AG04449 (cell line): ENCODE measurements at regions of chr13 and their contacts with region 1.

Region 1: GRCh38 chr13:35789335-35790165 is 313.1 kb upstream of the MAB21L1 start:
- DNase-seq: no peak
- H3K4me3 ChIP-seq: no peak overlapping the region
- CTCF ChIP-seq: peak; percentile 50

Region 2: DNA sequence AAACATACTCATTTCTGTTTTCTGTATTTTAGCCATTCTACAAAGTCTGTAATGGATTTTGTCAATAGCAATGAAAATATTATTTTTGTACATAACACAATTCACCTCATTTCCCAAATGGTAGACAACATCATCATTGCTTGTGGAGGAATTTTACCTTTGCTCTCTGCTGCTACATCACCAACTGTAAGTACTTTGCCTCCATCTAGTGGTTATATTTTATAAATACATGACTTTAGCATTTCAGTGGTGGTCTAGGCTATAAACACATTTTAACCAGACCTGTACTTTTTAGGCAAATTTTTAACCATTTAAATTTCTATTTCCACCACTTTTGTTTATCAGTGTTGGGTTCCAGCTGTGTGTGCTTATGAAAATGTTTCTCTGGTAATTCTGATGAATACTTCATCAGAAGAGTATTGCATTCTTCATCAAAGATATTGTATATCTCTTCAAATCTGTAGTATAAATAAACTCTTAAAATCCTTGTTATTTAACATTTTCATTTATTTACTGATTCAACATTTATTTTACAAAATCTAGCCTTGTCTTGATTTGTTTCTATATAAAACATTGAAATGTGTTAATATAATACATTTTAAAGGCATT is 625.1 kb before region 1 on chr13:
- CTCF ChIA-PET with region 1: interaction called, 13 read pairs
- POLR2A ChIA-PET with region 1: no interaction called
- DNase-seq: no peak
- H3K4me3 ChIP-seq: no peak overlapping the region
- CTCF ChIP-seq: peak; percentile 49

Region 3: DNA sequence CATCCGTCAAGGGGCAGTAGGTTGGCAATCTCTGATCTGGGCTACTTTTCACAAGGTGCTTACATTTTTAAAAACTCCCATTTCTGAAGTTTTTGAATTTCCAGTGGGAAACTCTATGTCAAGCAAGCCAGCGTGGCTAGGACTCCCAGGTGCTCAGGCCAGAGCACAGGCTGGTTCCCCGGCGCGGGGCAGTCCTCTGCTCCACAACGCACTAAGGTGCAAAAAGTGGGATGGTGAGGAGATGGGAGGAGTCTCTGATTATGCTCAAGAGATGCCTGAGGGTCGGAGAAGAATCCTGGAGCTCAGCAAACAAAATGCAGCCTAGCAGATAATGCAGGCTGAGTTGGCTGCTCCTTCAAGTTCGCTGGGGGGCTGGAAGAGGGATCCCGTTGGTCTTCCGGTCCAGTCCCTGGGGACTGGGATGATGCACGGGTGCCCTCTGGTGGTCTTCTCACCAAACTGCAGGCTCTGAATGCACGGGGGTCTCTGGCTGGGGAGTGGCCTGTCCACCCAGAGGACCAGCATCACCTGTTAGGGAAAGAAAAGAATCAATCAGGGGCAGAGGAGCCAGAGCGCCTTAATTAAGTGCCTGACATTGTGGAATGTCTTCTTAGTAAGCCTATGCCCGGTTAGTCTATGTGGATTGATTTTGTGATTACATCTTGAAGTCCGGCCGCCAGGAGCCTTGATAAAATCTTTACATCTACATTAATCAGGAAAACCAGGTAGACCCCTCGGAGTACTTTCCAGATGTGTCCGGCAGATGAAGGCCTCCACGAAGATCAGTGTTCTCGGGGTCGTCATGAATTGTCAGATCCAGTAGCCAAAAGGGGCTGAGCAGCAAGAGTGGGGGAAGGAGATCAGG is 68.6 kb before region 1 on chr13:
- CTCF ChIA-PET with region 1: interaction called, 72 read pairs
- POLR2A ChIA-PET with region 1: no interaction called
- DNase-seq: no peak
- H3K4me3 ChIP-seq: peak overlapping the region; percentile 35
- CTCF ChIP-seq: peak; percentile 98

Region 4: DNA sequence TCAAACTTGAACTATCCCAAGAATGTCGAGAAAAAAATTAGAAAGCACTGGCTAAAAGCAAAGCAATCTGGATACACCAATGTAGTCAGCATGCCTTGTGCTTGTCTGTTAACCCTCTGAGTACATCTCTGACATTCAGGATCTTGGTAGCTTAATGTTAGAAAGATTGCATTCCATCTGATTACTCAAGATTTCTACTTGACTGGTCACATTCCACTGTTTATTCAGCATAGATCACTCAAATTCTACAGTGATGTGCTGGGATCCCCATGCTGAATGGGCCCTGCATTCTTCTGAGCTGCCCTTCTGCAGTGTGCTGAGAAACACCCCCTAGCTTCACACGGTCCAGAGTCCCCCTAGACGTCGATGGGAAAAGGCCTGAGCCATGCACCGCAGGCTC is 17.7 kb before region 1 on chr13:
- CTCF ChIA-PET with region 1: interaction called, 42 read pairs
- POLR2A ChIA-PET with region 1: interaction called, 3 read pairs
- DNase-seq: peak; percentile 98
- H3K4me3 ChIP-seq: no peak overlapping the region
- CTCF ChIP-seq: peak; percentile 17

Region 5: GRCh38 chr13:35818633-35819067 is 29.1 kb after region 1 on chr13:
- CTCF ChIA-PET with region 1: interaction called, 22 read pairs
- POLR2A ChIA-PET with region 1: no interaction called
- DNase-seq: no peak
- H3K4me3 ChIP-seq: no peak overlapping the region
- CTCF ChIP-seq: peak; percentile 48

Region 6: DNA sequence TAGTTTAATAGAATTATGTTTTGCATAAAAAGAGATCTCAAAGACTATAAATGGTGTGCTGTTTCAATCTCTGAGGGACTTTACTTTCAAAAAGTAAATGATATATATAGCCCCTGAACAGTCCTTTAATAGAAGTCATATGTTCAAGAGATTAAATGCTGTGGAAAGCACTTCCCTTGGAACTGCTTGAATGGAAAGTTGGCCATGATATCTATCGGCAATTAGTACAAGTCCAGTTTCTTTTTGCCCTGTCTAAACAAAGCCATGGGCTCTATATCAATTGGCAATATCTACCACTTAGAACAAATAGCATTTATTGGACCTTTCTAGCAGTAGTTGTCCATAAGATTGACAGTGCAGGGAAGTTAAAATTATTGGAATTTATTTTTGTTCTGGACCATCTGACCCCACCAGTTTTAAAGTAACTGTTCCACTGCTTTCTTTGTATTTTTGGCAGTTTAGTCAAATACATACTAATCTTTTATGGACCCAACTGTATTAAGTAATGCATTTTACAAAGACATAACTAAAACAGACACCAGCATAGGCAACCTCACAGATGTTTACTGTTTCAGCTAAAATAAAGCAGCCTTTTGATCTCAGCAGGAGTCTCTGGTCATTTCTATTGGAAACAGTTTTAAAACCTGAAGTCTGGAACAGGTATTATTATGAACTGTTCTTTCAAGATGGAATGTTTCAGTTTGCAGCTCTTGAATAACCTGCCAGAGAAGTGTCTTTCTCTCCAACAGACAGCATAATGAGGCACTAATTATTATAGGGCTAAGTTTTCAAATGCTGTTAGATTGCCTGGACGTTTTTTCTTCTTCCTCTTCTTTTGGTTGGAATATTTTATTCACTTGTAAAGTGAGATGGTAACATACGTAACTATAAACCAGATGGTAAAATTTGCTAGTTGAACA is 59.0 kb after region 1 on chr13:
- CTCF ChIA-PET with region 1: no interaction called
- POLR2A ChIA-PET with region 1: no interaction called
- DNase-seq: no peak
- H3K4me3 ChIP-seq: no peak overlapping the region
- CTCF ChIP-seq: no peak